Posterior vena cava (tissue), 2 donors: ENCODE measurements at regions of chr16 and their contacts with region 1.

Region 1: GRCh38 chr16:29738514-29738913 is 7.3 kb downstream of the C16orf54 start:
- DNase-seq: peak; percentile 2

Region 2: GRCh38 chr16:29842732-29843346 is 104.3 kb after region 1 on chr16:
- intact Hi-C with region 1: no loop called
- DNase-seq: no peak

Region 3: DNA sequence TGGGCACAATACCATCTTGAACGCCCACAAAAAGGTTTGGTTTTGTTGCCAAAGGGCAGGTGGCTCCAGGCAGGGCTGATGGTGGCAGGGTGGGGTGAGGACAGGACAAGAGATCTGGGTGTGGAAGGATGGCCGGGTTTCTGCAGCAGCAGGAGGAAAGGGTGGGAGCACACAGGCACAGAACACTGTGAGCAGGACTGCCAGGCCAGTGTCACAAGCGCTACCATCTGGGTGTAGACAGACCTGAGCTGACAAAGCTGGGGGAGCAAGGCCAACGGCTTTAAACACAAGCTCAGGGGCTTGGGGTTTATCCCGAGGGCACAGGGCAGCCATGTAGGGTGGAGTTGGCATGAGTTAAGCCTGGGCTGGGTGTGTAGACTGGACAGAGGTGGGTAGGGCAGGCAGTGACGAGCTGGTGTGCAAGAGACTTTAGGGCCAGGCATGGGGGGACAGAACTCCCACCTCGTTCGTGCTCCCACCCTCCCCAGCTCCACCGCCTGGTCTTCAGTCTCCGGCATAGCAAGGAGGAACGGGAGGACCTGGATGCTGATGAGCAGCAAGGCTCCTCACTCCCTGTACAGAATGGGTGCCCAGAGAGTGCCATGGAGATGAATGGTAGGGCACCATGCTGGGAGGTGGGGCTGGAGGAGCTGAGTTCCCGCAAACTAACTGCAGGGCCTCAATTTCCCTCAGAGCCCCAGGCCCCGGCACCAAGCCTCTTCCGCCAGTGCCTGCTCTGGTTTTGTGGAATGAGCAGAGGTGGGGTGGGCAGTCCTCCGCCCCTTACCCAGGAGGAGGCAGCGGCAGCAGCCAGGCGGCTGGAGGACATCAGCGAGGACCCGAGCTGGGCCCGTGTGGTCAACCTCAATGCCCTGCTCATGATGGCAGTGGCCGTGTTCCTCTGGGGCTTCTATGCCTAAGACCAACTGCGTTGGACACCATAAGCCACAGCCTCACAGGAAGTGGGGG is 1751.4 kb after region 1 on chr16:
- intact Hi-C with region 1: loop called in 1 of 2 experiments (anchors 10 kb)
- DNase-seq: peak; percentile 54